Ascending aorta (tissue), 2 donors: ENCODE measurements at regions of chr4 and their contacts with region 1.

Region 1: DNA sequence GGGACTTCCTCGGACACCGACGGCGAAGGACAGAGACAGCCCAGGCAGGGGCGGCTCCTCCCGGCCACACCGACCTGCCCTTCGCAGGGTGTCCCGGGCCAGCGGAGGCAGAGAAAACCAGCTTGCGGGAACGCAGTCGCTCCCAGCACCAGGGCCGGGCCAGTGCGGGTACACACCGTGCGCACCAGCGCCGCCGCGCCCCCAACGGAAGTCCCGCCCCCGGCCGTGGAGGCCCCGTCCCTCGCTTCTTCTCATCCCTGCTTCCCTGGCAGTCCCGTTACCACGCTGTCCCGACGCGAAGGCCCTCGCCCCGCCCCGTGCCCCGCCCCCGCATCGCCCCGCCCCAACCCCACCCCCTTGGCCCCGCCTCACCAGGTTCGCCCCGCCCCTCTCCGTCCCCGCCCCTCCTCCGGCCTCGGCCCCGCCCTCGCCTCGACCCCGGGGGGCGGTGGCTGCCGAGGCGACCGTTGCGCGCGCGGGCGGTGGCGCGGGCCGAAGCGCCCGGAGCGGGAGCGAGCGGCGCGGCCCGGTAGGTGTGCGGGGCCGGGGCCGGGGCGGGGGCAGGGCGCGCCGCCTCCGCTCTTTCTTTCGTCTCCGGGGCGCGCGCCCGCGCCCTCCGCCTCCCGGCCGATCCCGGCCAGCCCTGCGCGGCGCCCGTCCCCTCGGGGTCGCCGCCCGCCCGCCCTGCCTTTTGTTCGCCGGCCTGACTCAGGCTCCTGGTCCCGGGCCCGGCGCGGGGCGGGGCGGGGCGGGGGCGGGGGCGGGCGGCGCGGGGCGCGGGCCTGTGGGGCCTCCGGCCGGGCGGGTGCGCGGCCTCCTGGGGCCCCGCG is at the start of gene RGS12:
- DNase-seq: peak; percentile 86 to 96
- H3K4me3 ChIP-seq: peak within 1 kb of the TSS; percentile 76 to 96
- H3K27ac ChIP-seq: peak within 1 kb of the TSS; percentile 90 to 98
- H3K4me1 ChIP-seq: peaks cover 5 to 11% of the 10 kb centered on the region in 2 donors
- H3K27me3 ChIP-seq: peaks cover 6% of the 10 kb centered on the region
- CTCF ChIP-seq: no peak
- total RNA-seq, gene RGS12: 26.3 TPM

Region 2: DNA sequence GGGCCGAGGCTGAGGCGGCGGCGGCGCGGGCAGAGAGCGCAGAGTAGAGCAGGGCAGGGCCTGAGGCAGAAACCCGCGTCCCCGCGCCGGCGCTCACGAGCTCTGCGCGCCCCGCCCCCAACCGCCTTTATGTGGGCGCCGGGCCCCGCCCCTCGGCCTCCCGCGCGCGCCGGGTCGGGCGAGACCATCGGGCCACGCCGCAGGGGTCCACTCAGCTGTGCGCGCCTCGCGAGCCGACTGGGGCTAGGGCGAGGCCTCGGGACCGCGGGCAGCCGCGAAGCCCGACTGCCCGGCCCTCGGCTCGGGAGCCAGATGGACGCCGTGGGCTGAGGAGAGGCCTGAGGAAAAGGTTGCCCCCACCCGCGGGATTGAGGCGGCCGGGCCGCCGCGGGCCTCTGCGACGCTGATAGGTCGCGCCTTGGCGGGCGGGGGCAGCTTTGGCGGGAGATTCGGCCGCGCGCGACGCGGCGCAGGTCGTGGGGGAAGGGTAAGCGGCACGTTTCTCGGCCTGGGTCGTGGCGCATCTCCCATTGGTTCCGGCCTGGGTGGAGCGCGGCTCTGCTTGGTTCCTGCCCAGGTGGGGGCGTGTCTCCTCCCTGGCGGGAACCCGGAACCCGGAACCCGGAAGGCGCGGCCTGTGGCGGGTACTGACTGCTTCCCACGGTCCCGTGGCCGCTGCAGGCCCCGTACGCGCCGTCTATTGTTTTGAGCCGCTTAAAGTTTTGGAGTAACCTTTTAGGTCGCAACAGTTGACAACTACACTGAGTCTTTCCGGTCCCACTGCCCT is 1580.4 kb before region 1 on chr4 and contains the start of gene SLBP:
- intact Hi-C with region 1: loop called (anchors 5 kb)
- DNase-seq: peak; percentile 86 to 98
- H3K4me3 ChIP-seq: peak within 1 kb of the TSS; percentile 93 to 94
- H3K27ac ChIP-seq: peak within 1 kb of the TSS; percentile 99 to 100
- H3K4me1 ChIP-seq: peaks cover 0 to 10% of the 10 kb centered on the region in 2 donors
- H3K27me3 ChIP-seq: no peaks in the 10 kb centered on the region
- CTCF ChIP-seq: no peak
- total RNA-seq, gene SLBP: 218 TPM

Region 3: DNA sequence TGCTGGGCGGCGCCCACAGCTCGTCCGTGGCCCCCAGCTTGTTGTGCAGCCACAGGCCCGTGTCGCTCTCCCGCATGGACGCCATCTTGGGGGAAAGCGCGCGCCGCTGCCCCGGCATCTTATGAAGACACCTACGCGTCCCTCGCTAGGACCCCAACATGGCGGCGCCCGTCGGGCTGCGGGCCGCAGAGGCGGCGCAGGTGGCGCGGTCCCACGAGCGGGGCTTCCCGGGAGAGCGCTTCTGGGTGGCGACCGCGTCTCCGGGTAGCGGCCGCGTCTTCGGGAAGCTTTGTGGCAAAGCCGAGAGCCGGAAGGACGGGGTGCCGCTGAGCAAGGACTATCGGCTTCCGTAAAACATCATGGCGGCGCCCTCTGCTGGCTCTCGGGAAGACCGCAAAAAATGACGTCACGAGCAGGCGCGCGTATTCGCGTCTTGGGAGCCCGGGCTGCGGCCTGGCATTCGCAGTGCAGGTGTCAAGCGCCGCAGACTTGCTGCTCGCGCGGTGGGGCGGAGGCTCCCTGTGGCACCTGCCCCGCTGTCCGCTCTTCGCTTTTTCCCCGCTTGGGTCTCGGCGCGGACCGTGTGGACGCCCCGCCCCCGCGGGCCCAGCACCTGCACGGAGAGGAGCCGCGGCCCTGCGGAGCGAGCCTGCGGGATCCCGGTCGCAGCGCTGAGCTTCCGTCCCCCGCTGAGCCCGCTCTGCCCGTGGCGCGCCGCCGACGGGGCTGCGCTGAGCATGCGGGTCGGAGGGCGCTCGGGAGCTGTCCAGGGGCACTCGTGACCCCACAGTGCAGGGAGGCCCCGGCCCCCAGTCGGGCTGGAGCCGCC is 1283.7 kb before region 1 on chr4 and contains the start of gene NELFA:
- intact Hi-C with region 1: loop called (anchors 5 kb)
- DNase-seq: peak; percentile 63 to 96
- H3K4me3 ChIP-seq: peak within 1 kb of the TSS; percentile 84 to 98
- H3K27ac ChIP-seq: peak within 1 kb of the TSS; percentile 96 to 98
- H3K4me1 ChIP-seq: peaks cover 0 to 2% of the 10 kb centered on the region in 2 donors
- H3K27me3 ChIP-seq: no peaks in the 10 kb centered on the region
- CTCF ChIP-seq: peak in 2 of 3 experiments; percentile 44 to 54
- total RNA-seq, gene NELFA: 11.9 TPM

Region 4: DNA sequence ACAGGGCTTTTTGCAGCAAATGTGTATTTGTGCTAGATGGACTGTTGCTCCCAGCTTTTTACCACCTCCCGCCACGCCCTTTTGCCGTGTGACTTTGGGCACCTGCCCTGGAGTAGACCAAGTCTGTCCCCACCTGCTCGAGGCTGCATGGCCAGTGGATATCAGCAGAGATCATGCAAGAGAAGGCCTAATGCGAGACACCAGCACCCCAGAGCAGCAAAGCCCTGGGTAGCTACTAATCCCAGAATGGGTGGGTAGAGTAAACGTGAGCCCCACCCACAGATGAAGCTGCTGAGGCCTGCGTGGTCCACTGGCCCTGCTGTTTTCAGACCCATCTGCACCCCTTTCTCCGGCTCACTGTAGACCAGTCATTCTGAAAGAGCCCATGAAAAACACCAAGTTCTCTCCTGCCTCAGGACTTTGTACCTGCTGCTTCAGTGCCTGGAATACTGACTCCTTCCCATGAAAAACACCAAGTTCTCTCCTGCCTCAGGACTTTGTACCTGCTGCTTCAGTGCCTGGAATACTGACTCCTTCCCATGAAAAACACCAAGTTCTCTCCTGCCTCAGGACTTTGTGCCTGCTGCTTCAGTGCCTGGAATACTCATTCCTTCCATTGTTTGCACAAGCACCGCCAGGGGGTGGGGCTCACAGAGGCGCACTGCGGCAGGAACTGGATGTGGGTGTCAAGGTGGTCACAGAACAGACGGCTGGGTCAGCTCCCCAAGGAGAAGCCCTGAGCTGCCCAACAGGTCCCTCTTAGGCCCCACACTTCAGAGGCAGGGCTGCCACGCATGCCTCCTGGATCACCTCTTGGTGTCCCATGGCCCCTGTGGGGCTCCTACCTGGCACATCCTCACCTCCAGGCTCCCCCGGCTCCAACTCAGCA is 531.5 kb before region 1 on chr4:
- intact Hi-C with region 1: loop called (anchors 10 kb)
- DNase-seq: no peak
- H3K4me3 ChIP-seq: no peak overlapping the region
- H3K27ac ChIP-seq: peak overlapping the region in 1 of 2 donors; percentile 63
- H3K4me1 ChIP-seq: peaks cover 0 to 3% of the 10 kb centered on the region in 2 donors
- H3K27me3 ChIP-seq: no peaks in the 10 kb centered on the region
- CTCF ChIP-seq: no peak

Region 5: DNA sequence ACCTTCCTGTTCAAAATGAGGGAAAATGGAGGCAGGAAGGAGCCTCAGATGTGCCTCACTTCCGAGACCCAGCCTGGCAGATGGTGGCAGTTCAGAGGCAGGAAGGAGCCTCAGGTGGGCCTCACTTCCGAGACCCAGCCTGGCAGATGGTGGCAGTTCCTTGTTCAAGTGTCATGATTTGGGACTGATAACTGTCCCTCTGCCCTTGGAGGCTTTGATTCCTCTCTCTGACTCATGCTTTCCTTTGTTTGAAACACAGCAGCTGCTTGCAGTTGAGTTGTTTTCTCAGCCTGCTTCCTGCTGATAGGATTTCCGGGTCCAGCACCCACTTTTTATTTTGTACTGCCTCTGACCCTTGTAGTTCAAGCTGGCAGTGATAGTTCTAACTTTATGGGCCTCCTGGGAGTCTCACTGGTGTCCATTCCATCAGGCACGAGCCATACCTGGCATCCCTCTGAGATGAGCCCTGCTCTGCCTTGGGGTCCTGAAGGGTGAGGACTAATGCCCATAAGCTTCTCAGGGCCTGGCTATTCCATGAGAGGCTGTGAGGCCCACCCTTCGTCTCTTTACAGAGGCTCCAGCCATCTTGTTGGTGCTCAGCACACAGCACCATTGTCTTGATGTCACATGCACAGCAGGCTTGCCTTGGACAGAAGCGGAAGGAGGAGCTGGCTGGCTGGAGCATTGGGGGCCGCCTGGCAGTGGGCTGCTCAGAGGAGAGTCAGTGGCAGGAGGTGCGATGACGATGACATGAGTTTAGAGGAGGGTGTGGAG is 13.0 kb after region 1 on chr4:
- intact Hi-C with region 1: no loop called
- DNase-seq: peak in 1 of 2 donors; percentile 50
- H3K4me3 ChIP-seq: no peak overlapping the region
- H3K27ac ChIP-seq: no peak overlapping the region
- H3K4me1 ChIP-seq: no peaks in the 10 kb centered on the region
- H3K27me3 ChIP-seq: no peaks in the 10 kb centered on the region
- CTCF ChIP-seq: no peak

Region 6: GRCh38 chr4:3531879-3532713 is 239.3 kb after region 1 on chr4 and contains the start of gene LRPAP1:
- intact Hi-C with region 1: loop called (anchors 2 kb)
- DNase-seq: peak; percentile 65 to 95
- H3K4me3 ChIP-seq: peak within 1 kb of the TSS; percentile 96 to 99
- H3K27ac ChIP-seq: peak within 1 kb of the TSS; percentile 72 to 76
- H3K4me1 ChIP-seq: peaks cover 3 to 20% of the 10 kb centered on the region in 2 donors
- H3K27me3 ChIP-seq: no peaks in the 10 kb centered on the region
- CTCF ChIP-seq: no peak
- total RNA-seq, gene LRPAP1: 172 TPM